ENCODE measurements at regions of chr20 and their contacts with region 1.

Region 1: DNA sequence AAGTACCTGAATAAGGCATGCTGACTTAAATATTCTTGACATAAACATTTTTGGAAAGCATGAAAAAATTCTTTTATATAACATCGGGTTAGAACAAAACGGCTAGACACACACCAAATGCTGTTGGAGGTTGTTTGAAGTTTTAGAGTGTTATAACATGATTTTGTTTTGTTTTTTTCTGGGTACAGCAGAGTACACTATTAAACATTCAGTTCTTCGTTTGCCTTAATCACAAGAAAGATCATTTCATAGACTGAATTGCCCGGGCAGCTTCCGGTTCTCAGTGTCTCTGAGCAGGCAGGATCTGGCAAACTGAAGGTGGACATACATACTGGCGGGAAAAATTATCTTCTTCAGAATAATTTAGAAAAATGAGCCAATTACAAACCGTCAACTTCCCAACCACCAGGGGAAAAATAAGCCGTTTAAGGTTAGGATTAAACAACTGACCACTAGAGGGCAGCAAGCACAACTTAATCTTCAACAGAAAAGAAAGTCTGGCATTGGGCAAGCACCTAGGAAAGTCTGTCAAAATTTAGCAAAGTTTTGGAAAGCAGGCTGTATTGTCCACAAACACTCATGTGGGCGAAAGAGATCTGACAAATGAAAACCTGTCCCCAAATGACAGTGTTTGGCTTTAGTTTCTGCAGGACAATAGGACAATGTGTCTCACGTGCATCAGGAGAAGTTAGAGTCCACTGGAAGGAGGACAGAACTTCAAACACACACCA is 15.0 kb downstream of the ZNF217 start:
- DNase-seq: peak in 28 of 35 experiments; percentile 20 to 95 (median 55)
- ATAC-seq: peak; percentile 26 to 62 (median 32)
- H3K4me3 ChIP-seq: peak overlapping the region; percentile 41 to 53
- H3K4me3 Mint-ChIP-seq: peak overlapping the region; percentile 78 to 90 (median 81)
- H3K27ac ChIP-seq: peak overlapping the region; percentile 84
- H3K27ac Mint-ChIP-seq: peak overlapping the region; percentile 92 to 95
- H3K4me1 ChIP-seq: peaks cover 49 to 75% of the 10 kb centered on the region in 2 experiments
- H3K4me1 Mint-ChIP-seq: peaks cover 94 to 95% (median 94%) of the 10 kb centered on the region in 3 donors
- H3K27me3 ChIP-seq: no peaks in the 10 kb centered on the region
- H3K27me3 Mint-ChIP-seq: no peaks in the 10 kb centered on the region

Region 2: GRCh38 chr20:53652859-53653517 is 74.3 kb after region 1 on chr20:
- CTCF ChIA-PET with region 1: no interaction called
- POLR2A ChIA-PET with region 1: no interaction called
- DNase-seq: no peak
- ATAC-seq: peak in 2 of 4 experiments; percentile 2 to 29
- H3K4me3 ChIP-seq: no peak overlapping the region
- H3K4me3 Mint-ChIP-seq: peak overlapping the region; percentile 63 to 77 (median 73)
- H3K27ac ChIP-seq: peak overlapping the region; percentile 92
- H3K27ac Mint-ChIP-seq: peak overlapping the region; percentile 98 to 99
- H3K4me1 ChIP-seq: peaks cover 9 to 41% of the 10 kb centered on the region in 2 experiments
- H3K4me1 Mint-ChIP-seq: peaks cover 48 to 52% (median 50%) of the 10 kb centered on the region in 3 donors
- H3K27me3 ChIP-seq: no peaks in the 10 kb centered on the region
- H3K27me3 Mint-ChIP-seq: no peaks in the 10 kb centered on the region

Region 3: GRCh38 chr20:53939572-53940359 is 361.1 kb after region 1 on chr20:
- CTCF ChIA-PET with region 1: interaction called, 6 to 29 read pairs
- POLR2A ChIA-PET with region 1: no interaction called
- DNase-seq: peak; percentile 17 to 77 (median 48)
- ATAC-seq: peak; percentile 58 to 89 (median 64)
- H3K4me3 ChIP-seq: no peak overlapping the region
- H3K4me3 Mint-ChIP-seq: no peak overlapping the region
- H3K27ac ChIP-seq: no peak overlapping the region
- H3K27ac Mint-ChIP-seq: no peak overlapping the region
- H3K4me1 ChIP-seq: peaks cover 12 to 19% of the 10 kb centered on the region in 2 experiments
- H3K4me1 Mint-ChIP-seq: peaks cover 34 to 46% (median 35%) of the 10 kb centered on the region in 3 donors
- H3K27me3 ChIP-seq: no peaks in the 10 kb centered on the region
- H3K27me3 Mint-ChIP-seq: no peaks in the 10 kb centered on the region

Measured in T-cell (primary cell).